HCT116 (cell line): ENCODE measurements at regions of chr10 and their contacts with region 1.

Region 1: DNA sequence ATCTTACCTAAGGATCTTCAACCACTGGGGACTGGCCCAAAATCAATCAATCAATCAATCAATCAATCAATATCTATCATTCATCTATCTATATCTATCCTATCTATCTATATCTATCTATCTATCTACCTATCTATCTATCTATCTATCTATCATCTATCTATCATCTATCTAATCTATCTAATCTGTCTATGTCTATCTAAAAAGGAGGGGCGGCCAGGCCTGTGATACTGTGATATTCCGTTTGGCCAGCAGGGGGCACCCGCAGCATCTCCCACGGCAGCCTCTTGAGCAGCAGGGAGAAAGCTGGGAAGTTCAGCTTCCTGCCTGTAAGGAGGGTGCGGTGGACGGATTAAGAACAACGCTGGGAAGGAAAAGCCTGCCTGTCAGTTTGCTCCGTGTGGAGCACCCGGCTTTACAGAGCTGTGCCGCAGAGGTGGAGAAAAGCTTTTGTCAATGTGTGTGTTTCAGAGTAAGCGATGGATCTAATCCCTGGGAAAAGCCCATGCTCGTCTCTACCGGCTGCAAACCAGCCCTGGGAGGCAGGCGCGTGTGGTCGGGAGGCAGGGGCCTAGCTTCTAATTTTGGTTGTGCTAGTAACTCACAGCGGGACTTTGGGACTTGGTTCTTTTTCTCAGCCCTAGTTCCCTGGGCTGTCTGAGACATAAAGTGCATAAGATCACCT is 125.0 kb downstream of the SH2D4B start:
- DNase-seq: peak; percentile 61
- ATAC-seq: peak; percentile 87
- H3K4me3 ChIP-seq: peak overlapping the region; percentile 38 to 39
- H3K27ac ChIP-seq: no peak overlapping the region
- H3K4me1 ChIP-seq: peaks cover 3 to 13% of the 10 kb centered on the region in 2 experiments; a peak in 2 of 4 replicates
- H3K27me3 ChIP-seq: no peaks in the 10 kb centered on the region
- CTCF ChIP-seq: peak; percentile 75 to 88 (median 83)
- POLR2A ChIP-seq: no peak
- RAD21 ChIP-seq: peak; percentile 73

Region 2: GRCh38 chr10:80459047-80459931 is 203.4 kb before region 1 on chr10:
- CTCF ChIA-PET with region 1: no interaction called
- POLR2A ChIA-PET with region 1: no interaction called
- RAD21 ChIA-PET with region 1: no interaction called
- intact Hi-C with region 1: no loop called
- DNase-seq: no peak
- ATAC-seq: peak; percentile 65
- H3K4me3 ChIP-seq: peak overlapping the region in 1 of 2 experiments; percentile 47; a peak in 1 of 4 replicates
- H3K27ac ChIP-seq: peak overlapping the region; percentile 79
- H3K4me1 ChIP-seq: peaks cover 81 to 92% of the 10 kb centered on the region in 2 experiments
- H3K27me3 ChIP-seq: no peaks in the 10 kb centered on the region
- CTCF ChIP-seq: no peak
- POLR2A ChIP-seq: no peak
- RAD21 ChIP-seq: 0 out of 2 replicates have a peak, but pooled peaks have one; percentile 4

Region 3: GRCh38 chr10:80647173-80647811 is 15.4 kb before region 1 on chr10:
- CTCF ChIA-PET with region 1: interaction called, 21 read pairs
- POLR2A ChIA-PET with region 1: no interaction called
- RAD21 ChIA-PET with region 1: no interaction called
- intact Hi-C with region 1: no loop called
- DNase-seq: no peak
- ATAC-seq: no peak
- H3K4me3 ChIP-seq: no peak overlapping the region
- H3K27ac ChIP-seq: no peak overlapping the region
- H3K4me1 ChIP-seq: no peaks in the 10 kb centered on the region
- H3K27me3 ChIP-seq: peaks cover 37% of the 10 kb centered on the region
- CTCF ChIP-seq: no peak
- POLR2A ChIP-seq: no peak
- RAD21 ChIP-seq: no peak

Region 4: GRCh38 chr10:80924063-80924952 is 261.6 kb after region 1 on chr10:
- CTCF ChIA-PET with region 1: interaction called, 37 read pairs
- POLR2A ChIA-PET with region 1: interaction called, 4 read pairs
- RAD21 ChIA-PET with region 1: interaction called, 3 to 5 read pairs
- intact Hi-C with region 1: loop called (anchors 1 kb)
- DNase-seq: peak; percentile 21
- ATAC-seq: peak; percentile 78
- H3K4me3 ChIP-seq: no peak overlapping the region
- H3K27ac ChIP-seq: no peak overlapping the region
- H3K4me1 ChIP-seq: no peaks in the 10 kb centered on the region
- H3K27me3 ChIP-seq: no peaks in the 10 kb centered on the region
- CTCF ChIP-seq: peak; percentile 49 to 78 (median 60); a peak in 5 of 6 replicates
- POLR2A ChIP-seq: no peak
- RAD21 ChIP-seq: peak; percentile 49

Region 5: GRCh38 chr10:81018708-81019365 is 356.1 kb after region 1 on chr10:
- CTCF ChIA-PET with region 1: interaction called, 4 read pairs
- POLR2A ChIA-PET with region 1: no interaction called
- RAD21 ChIA-PET with region 1: no interaction called
- intact Hi-C with region 1: loop called (anchors 10 kb)
- DNase-seq: peak; percentile 31
- ATAC-seq: peak; percentile 82; the same call in 1 of the 2 replicates
- H3K4me3 ChIP-seq: no peak overlapping the region
- H3K27ac ChIP-seq: no peak overlapping the region
- H3K4me1 ChIP-seq: no peaks in the 10 kb centered on the region
- H3K27me3 ChIP-seq: no peaks in the 10 kb centered on the region
- CTCF ChIP-seq: peak; percentile 37 to 71 (median 66); a peak in 4 of 6 replicates
- POLR2A ChIP-seq: no peak
- RAD21 ChIP-seq: peak; percentile 42